Esophagus muscularis mucosa (tissue), 4 donors: ENCODE measurements at regions of chr22 and their contacts with region 1.

Region 1: DNA sequence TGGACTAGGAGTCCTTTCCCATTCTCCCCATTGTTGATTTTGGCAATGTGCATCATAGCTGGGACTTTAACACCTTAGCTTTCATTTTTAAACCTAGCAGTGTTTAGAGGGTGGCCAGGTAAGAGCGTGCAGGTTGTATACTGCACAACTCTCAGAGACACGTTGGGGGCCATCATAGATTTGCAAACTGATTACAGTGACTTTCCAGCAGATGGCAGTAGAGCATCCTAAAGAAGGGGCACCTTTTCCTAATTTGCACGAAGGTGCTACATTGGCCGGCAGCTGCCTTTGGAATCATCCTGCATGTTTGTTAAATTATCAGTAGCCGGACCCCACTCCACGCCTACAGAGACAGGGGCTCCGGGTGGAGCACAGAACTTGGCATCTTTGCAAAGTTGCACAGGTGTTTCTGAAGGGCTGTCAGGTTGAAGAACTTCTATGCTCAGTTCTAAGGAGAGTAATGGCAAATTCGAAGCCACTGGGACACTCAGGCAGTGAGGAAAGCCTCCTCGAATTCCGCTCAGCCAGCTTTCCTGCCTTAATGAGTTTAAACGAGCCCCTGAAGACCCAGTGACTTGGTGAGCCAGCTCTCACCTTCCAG is 7.7 kb downstream of the LHFPL7 start:
- DNase-seq: no peak
- H3K4me3 ChIP-seq: no peak overlapping the region
- H3K27ac ChIP-seq: no peak overlapping the region
- H3K4me1 ChIP-seq: no peaks in the 10 kb centered on the region
- H3K27me3 ChIP-seq: no peaks in the 10 kb centered on the region
- CTCF ChIP-seq: peak; percentile 61 to 80 (median 65)
- EP300 ChIP-seq: no peak
- POLR2A ChIP-seq: no peak

Region 2: DNA sequence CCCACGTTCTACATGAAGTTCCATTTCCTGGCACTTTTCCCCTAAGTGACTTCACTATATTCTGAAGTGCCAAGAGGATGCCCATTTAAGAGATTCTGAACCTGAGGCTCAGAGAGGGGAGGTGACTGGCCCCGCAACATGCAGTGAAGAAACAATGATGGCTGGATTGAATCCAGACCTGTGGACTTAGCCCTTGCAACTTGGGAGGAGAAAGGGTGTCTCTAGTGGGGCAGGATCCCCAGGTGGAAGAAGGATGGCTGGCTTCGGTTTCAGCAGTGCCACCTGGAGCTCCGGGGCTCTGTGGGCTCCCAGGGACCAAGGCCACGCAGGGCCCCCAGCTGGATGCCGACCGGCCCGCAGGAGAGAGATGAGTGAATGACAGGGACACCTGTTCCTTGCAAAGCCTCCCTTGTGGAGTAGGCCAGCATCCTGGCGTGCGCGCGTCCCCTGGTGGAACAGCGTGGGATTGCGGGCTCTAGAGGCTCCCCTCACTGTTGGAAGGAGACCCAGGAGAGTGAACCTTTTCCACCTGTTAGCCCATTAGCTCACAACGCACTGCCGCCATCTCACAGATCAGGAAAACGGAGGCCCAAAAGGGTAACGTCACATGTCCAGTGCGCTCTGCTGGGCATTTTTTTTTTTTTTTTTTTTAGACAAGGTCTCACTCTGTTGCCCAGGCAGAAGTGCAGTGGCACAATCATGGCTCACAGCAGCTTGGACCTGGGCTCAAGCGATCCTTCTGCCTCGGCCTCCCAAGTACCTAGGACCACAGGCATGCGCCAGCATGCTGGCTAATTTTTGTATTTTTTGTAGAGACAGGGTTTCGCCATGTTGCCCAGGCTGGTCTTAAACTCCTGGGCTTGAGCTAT is 118.4 kb after region 1 on chr22:
- intact Hi-C with region 1: loop called (anchors 5 kb)
- DNase-seq: no peak
- H3K4me3 ChIP-seq: no peak overlapping the region
- H3K27ac ChIP-seq: no peak overlapping the region
- H3K4me1 ChIP-seq: peaks cover 0 to 1% (median 0%) of the 10 kb centered on the region in 4 donors
- H3K27me3 ChIP-seq: no peaks in the 10 kb centered on the region
- CTCF ChIP-seq: peak; percentile 70 to 87 (median 78)
- EP300 ChIP-seq: no peak
- POLR2A ChIP-seq: no peak